Ovary (tissue), 10 donors: ENCODE measurements at regions of chr15 and their contacts with region 1.

Region 1: GRCh38 chr15:83248151-83249029 is 36.1 kb downstream of the BNC1 start:
- DNase-seq: no peak
- H3K4me3 ChIP-seq: no peak overlapping the region
- H3K27ac ChIP-seq: no peak overlapping the region
- H3K4me1 ChIP-seq: no peaks in the 10 kb centered on the region
- H3K27me3 ChIP-seq: no peaks in the 10 kb centered on the region
- CTCF ChIP-seq: peak; percentile 41 to 68 (median 56)
- EP300 ChIP-seq: no peak
- POLR2A ChIP-seq: no peak

Region 2: GRCh38 chr15:84023636-84024035 is 775.2 kb after region 1 on chr15:
- intact Hi-C with region 1: loop called in 1 of 4 experiments (anchors 10 kb)
- DNase-seq: peak; percentile 24 to 67 (median 42)
- H3K4me3 ChIP-seq: no peak overlapping the region
- H3K27ac ChIP-seq: no peak overlapping the region
- H3K4me1 ChIP-seq: no peaks in the 10 kb centered on the region
- H3K27me3 ChIP-seq: no peaks in the 10 kb centered on the region
- CTCF ChIP-seq: peak in 2 of 3 donors; percentile 53 to 74
- EP300 ChIP-seq: no peak
- POLR2A ChIP-seq: no peak